ENCODE measurements at regions of chr17 and their contacts with region 1.

Region 1: DNA sequence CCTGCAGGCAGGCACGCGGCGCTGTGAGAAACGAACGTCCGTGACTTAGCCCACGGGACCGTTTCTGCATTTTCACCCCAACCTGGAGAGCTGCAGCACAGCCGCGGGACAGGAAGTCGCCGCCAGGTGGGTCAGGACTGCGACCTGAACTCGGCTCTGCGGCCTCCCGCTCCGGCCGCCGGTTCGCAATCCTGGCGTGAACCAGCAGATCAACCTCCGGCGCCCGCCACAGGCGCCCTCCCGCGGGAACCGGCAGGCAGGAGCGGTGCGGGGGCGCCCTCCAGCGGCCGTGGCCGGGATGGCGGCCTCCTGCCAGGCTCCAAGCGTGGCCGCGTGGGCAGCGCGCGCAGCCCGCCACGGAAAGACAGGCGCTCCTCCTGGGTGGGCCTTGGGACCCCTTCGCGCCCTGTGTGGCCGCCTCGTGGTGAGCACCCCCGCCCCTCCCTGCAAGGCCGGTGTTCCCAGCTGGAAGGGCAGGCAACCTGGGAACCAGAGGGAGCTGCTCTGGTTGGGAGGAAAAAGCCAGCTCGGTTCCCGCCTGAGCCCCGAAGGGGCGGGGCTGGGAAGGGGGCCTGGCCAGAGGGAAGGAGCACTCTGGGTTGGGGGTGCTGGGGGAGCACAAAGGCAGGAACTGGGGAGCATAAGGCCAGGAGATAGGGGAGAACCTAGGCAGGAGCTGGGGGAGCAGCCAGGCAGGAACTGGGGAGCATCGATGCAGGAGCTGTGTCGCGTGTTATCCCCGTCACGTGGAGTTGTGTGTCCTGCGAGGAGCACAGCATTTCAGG is 28.2 kb downstream of the ACTG1 start:
- DNase-seq: peak; percentile 94
- ATAC-seq: peak; percentile 68
- H3K4me3 Mint-ChIP-seq: peak overlapping the region; percentile 30
- H3K27ac Mint-ChIP-seq: no peak overlapping the region
- H3K4me1 Mint-ChIP-seq: peaks cover 16% of the 10 kb centered on the region
- H3K27me3 Mint-ChIP-seq: peaks cover 26% of the 10 kb centered on the region

Region 2: GRCh38 chr17:80991645-80992076 is 492.7 kb before region 1 on chr17 and contains the start of gene CHMP6:
- CTCF ChIA-PET with region 1: no interaction called
- POLR2A ChIA-PET with region 1: no interaction called
- intact Hi-C with region 1: loop called in 1 of 2 experiments (anchors 5 kb)
- DNase-seq: peak; percentile 83
- ATAC-seq: peak; percentile 49
- H3K4me3 Mint-ChIP-seq: peak within 1 kb of the TSS; percentile 69
- H3K27ac Mint-ChIP-seq: peak within 1 kb of the TSS; percentile 74
- H3K4me1 Mint-ChIP-seq: peaks cover 21% of the 10 kb centered on the region
- H3K27me3 Mint-ChIP-seq: peaks cover 3% of the 10 kb centered on the region
- total RNA-seq, gene CHMP6: 15.9 to 19.4 TPM

Region 3: GRCh38 chr17:81253358-81254131 is 230.8 kb before region 1 on chr17:
- CTCF ChIA-PET with region 1: interaction called, 8 read pairs
- POLR2A ChIA-PET with region 1: no interaction called
- intact Hi-C with region 1: loop called (anchors 1 kb)
- DNase-seq: peak; percentile 75
- ATAC-seq: peak; percentile 78
- H3K4me3 Mint-ChIP-seq: no peak overlapping the region
- H3K27ac Mint-ChIP-seq: no peak overlapping the region
- H3K4me1 Mint-ChIP-seq: peaks cover 8% of the 10 kb centered on the region
- H3K27me3 Mint-ChIP-seq: no peaks in the 10 kb centered on the region

Region 4: GRCh38 chr17:81263371-81264181 is 220.8 kb before region 1 on chr17:
- CTCF ChIA-PET with region 1: no interaction called
- POLR2A ChIA-PET with region 1: no interaction called
- intact Hi-C with region 1: no loop called
- DNase-seq: no peak
- ATAC-seq: no peak
- H3K4me3 Mint-ChIP-seq: no peak overlapping the region
- H3K27ac Mint-ChIP-seq: no peak overlapping the region
- H3K4me1 Mint-ChIP-seq: no peaks in the 10 kb centered on the region
- H3K27me3 Mint-ChIP-seq: no peaks in the 10 kb centered on the region

Region 5: GRCh38 chr17:81294856-81295680 is 189.3 kb before region 1 on chr17 and contains the start of gene SLC38A10:
- CTCF ChIA-PET with region 1: interaction called, 8 read pairs
- POLR2A ChIA-PET with region 1: no interaction called
- intact Hi-C with region 1: loop called (anchors 1 to 5 kb)
- DNase-seq: peak; percentile 95
- ATAC-seq: peak; percentile 91
- H3K4me3 Mint-ChIP-seq: peak within 1 kb of the TSS; percentile 89
- H3K27ac Mint-ChIP-seq: peak within 1 kb of the TSS; percentile 96
- H3K4me1 Mint-ChIP-seq: peaks cover 36% of the 10 kb centered on the region
- H3K27me3 Mint-ChIP-seq: no peaks in the 10 kb centered on the region
- total RNA-seq, gene SLC38A10: 47.6 to 52.9 TPM

Region 6: DNA sequence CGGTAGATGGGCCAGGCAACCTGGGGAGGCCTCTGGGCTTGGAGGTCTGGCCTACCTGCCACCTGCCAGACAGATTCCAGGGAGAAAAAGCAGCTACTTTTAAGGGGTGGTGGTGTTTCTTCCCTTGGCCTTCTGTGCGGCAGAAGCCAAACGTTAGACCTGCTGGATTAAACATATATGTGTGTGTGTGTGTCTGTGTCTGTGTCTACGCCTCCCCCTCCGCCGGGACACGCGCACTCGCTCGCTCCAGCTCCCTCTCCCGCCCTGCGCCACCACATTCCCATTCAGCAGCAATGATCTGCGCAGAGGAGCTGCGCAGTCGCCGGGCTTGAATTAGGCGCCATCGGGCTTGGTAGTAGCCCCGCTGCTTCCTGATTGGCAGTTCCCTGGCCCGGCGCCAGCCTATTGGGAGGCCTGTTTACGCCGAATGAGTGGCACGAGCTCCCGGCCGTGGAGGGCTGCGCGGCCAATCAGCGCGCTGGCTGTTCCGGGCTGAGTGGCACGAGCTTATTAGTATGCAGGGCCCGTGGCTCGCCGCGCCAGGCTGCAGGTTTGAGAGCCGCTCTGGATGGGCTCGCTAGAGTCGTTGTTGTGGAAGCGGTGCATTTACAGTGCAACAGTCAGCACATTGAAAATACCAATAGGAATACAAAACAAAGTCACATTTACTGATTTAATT is 89.3 kb before region 1 on chr17 and contains the start of gene BAHCC1:
- CTCF ChIA-PET with region 1: interaction called, 6 read pairs
- POLR2A ChIA-PET with region 1: no interaction called
- intact Hi-C with region 1: loop called (anchors 2 kb)
- DNase-seq: peak; percentile 97
- ATAC-seq: peak; percentile 92
- H3K4me3 Mint-ChIP-seq: peak within 1 kb of the TSS; percentile 46
- H3K27ac Mint-ChIP-seq: peak within 1 kb of the TSS; percentile 39
- H3K4me1 Mint-ChIP-seq: peaks cover 24% of the 10 kb centered on the region
- H3K27me3 Mint-ChIP-seq: peaks cover 51% of the 10 kb centered on the region
- total RNA-seq, gene BAHCC1: 0.05 TPM in 1 of 2 experiments, not detected in the other

Region 7: GRCh38 chr17:81553018-81553615 is 68.7 kb after region 1 on chr17:
- CTCF ChIA-PET with region 1: no interaction called
- POLR2A ChIA-PET with region 1: no interaction called
- intact Hi-C with region 1: loop called (anchors 1 to 2 kb)
- DNase-seq: peak; percentile 91
- ATAC-seq: peak; percentile 78
- H3K4me3 Mint-ChIP-seq: peak overlapping the region; percentile 89
- H3K27ac Mint-ChIP-seq: peak overlapping the region; percentile 86
- H3K4me1 Mint-ChIP-seq: peaks cover 38% of the 10 kb centered on the region
- H3K27me3 Mint-ChIP-seq: no peaks in the 10 kb centered on the region

Measured in activated CD4-positive, alpha-beta T cell treated with anti-CD3 and anti-CD28 coated beads for 36 hours (primary cell).